ENCODE measurements at regions of chr13 and their contacts with region 1.

Region 1: DNA sequence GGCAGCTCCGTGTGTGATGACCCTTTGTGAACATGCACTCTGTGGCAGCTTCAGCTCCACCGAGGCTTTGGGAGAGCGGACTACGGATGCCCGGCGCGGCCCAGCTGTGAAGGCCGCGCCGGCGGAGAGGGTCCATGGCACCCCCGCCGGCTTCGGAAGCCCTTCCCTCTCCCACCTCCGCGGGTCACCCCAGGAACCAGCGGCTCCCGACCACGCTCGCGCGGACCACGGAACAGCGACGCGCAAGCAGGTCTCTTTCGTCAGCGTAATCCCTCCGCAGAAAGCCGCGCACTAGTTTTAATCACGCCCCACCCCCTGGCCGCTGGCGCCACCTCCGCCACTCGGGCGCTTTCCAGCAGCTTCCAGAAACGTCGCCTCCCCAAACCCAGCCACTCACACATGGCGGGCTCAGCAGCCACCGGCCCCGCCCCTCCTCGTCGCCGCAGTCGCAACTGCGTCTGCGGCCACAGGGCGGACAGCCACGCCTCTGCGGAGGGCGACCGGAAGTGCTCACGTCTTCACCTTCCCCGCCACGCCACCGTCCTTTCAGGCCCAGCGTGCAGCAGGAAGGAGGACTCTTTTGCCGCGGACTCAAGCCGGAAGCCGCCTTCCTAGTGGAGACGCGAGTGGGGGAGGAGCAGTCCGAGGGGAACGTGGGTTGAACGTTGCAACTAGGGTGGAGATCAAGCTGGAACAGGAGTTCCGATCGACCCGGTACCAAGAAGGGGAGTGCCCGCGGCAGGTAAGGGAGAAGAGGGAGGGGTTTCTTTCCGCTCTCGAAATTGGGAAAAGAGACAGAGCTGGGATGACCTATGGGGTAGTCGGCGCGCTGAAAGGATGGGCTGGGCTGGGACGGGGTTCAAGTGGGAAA is at the start of gene USPL1:
- DNase-seq: peak; percentile 92 to 98
- H3K4me3 ChIP-seq: peak within 1 kb of the TSS; percentile 77 to 81
- H3K27ac ChIP-seq: peak within 1 kb of the TSS; percentile 99 to 100
- H3K4me1 ChIP-seq: peaks cover 0 to 21% of the 10 kb centered on the region in 2 donors
- H3K27me3 ChIP-seq: no peaks in the 10 kb centered on the region
- CTCF ChIP-seq: peak; percentile 19 to 63 (median 20)
- total RNA-seq, gene USPL1: 4.0 TPM

Region 2: GRCh38 chr13:30132623-30133553 is 484.7 kb before region 1 on chr13:
- intact Hi-C with region 1: loop called (anchors 2 kb)
- DNase-seq: peak; percentile 87 to 98
- H3K4me3 ChIP-seq: peak overlapping the region in 1 of 2 donors; percentile 10
- H3K27ac ChIP-seq: no peak overlapping the region
- H3K4me1 ChIP-seq: no peaks in the 10 kb centered on the region
- H3K27me3 ChIP-seq: no peaks in the 10 kb centered on the region
- CTCF ChIP-seq: peak; percentile 83 to 95 (median 84)

Region 3: DNA sequence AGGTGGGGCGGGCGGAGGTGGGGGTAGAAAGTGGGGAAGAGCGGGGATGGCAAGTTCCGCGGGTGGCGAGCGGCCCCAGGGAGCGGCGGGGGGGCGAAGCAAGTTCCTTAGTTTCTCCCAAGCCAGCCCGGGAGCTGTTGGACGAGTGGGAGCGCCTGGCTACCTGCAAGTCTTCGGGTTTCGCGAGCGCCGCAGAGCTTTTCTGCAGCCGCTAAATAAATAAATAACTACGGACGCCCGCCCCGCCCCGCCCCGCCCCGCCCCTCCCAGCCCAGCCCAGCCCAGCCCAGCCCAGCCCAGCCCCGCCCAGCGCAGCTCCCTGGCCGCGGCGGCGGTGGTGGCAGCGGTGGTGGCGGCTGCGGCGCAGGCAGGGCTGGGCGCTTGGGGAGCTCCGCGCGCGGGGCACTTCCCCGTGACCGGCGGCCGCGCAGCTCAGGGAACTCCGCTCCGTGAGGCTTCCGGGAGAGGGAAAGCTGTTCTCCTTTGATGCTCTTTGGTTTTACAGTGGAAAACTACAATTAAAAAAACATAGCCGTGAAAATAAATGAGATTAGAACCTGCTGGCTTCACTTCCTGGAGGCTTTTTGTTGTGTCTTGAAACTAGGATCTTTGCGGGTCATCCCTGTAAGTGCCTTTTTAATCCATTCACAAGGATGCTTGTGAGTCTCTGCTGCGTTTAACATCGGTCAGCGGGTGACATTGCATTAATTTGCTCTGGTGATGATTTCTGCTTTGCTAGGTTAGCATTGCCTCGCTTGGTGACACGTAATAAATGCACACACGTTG is 195.3 kb before region 1 on chr13 and contains the start of gene UBE2L5:
- intact Hi-C with region 1: loop called (anchors 1 kb)
- DNase-seq: peak; percentile 10 to 87
- H3K4me3 ChIP-seq: peak within 1 kb of the TSS; percentile 73 to 75
- H3K27ac ChIP-seq: peak within 1 kb of the TSS; percentile 95 to 98
- H3K4me1 ChIP-seq: peaks cover 8 to 12% of the 10 kb centered on the region in 2 donors
- H3K27me3 ChIP-seq: no peaks in the 10 kb centered on the region
- CTCF ChIP-seq: no peak
- total RNA-seq, gene UBE2L5: not detected

Region 4: GRCh38 chr13:30802953-30803478 is 185.5 kb after region 1 on chr13:
- intact Hi-C with region 1: loop called (anchors 2 kb)
- DNase-seq: peak; percentile 47 to 95
- H3K4me3 ChIP-seq: peak overlapping the region; percentile 43 to 54
- H3K27ac ChIP-seq: peak overlapping the region in 1 of 2 donors; percentile 60
- H3K4me1 ChIP-seq: peaks cover 0 to 13% of the 10 kb centered on the region in 2 donors
- H3K27me3 ChIP-seq: no peaks in the 10 kb centered on the region
- CTCF ChIP-seq: peak; percentile 89 to 97 (median 91)

Region 5: DNA sequence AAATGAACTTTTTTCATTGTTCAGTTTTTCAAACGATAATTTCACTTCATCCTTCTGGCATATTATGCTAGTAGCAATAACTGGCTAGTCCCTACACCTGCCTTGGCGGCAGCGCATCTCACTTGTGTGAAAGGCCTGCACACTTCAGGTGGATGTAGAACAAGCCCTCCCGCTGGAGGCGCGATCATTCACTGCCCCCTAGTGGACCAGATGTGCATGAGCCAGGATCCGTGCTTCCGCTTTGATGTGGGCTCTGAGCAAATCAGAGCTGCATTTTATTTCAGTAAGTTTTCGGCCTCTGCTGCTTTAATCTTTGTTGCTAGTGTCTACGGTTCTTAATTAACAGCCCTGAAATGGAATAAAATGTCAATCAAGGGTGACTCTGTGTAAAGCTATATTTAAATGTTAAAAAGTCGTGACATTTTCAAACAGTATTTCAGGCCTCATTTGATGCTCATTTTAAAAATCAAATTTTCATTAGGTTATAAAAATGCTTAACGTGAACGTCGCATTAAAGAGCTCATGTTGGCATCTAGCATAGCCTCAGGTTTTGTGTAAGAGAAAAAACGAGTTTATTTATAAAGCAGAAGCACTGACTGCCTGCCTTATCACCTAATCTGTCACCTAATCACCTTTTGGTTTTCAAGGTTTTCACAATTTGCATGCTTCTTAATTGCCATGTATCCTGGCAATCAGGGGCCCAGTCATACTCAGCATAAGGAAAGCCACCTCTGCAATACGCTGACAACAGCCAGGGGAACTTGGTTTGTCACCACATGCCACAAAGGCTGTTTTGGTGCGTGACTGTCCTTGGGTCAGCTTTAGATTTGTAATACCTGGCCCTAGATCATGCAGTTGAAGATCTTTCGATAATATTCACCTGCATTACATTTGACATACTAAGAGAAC is 427.1 kb after region 1 on chr13:
- intact Hi-C with region 1: loop called (anchors 2 kb)
- DNase-seq: peak; percentile 28 to 88
- H3K4me3 ChIP-seq: no peak overlapping the region
- H3K27ac ChIP-seq: peak overlapping the region in 1 of 2 donors; percentile 23
- H3K4me1 ChIP-seq: peaks cover 0 to 2% of the 10 kb centered on the region in 2 donors
- H3K27me3 ChIP-seq: no peaks in the 10 kb centered on the region
- CTCF ChIP-seq: peak; percentile 68 to 96 (median 89)